CD4-positive, alpha-beta memory T cell (primary cell): ENCODE measurements at regions of chr1 and their contacts with region 1.

Region 1: DNA sequence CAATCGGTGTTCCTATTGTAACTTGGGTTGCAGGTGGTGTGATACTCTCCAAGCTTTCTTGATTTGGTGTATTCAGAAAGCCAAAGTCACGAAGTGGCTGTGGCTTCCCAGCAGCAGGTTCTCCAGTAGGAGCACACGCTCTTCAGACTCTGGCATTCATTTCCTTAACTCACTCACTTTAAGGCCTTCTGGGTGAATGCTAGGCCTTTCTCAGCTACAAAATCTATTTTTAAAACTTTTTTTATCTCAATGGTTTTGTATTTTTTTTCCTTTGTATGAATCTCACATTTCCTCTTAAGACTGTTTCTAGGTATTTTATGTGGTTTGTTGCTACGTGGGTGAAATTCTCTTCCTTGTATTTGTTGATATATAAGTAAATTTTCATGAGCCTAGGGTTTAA is 22.9 kb upstream of the PKN2 start:
- DNase-seq: peak in 1 of 5 donors; percentile 5
- H3K4me3 ChIP-seq: no peak overlapping the region
- H3K4me3 Mint-ChIP-seq: peak overlapping the region; percentile 1 to 68 (median 60)
- H3K27ac ChIP-seq: no peak overlapping the region
- H3K27ac Mint-ChIP-seq: peak overlapping the region in 6 of 7 donors; percentile 2 to 69 (median 59)
- H3K4me1 ChIP-seq: peaks cover 14% of the 10 kb centered on the region
- H3K4me1 Mint-ChIP-seq: peaks cover 11 to 20% (median 18%) of the 10 kb centered on the region in 4 donors
- H3K27me3 ChIP-seq: no peaks in the 10 kb centered on the region
- H3K27me3 Mint-ChIP-seq: peaks cover 2 to 6% of the 10 kb centered on the region in 2 donors

Region 2: GRCh38 chr1:88683541-88684481 is 22.6 kb after region 1 on chr1 and contains the start of gene PKN2:
- CTCF ChIA-PET with region 1: interaction called, 53 read pairs
- POLR2A ChIA-PET with region 1: interaction called, 16 read pairs
- intact Hi-C with region 1: no loop called
- DNase-seq: peak; percentile 97 to 98 (median 98)
- H3K4me3 ChIP-seq: peak within 1 kb of the TSS; percentile 43 to 82
- H3K4me3 Mint-ChIP-seq: peak within 1 kb of the TSS; percentile 95 to 99 (median 97)
- H3K27ac ChIP-seq: peak within 1 kb of the TSS; percentile 85
- H3K27ac Mint-ChIP-seq: peak within 1 kb of the TSS; percentile 96 to 99 (median 98)
- H3K4me1 ChIP-seq: peaks cover 39% of the 10 kb centered on the region
- H3K4me1 Mint-ChIP-seq: peaks cover 15 to 58% (median 24%) of the 10 kb centered on the region in 4 donors
- H3K27me3 ChIP-seq: no peaks in the 10 kb centered on the region
- H3K27me3 Mint-ChIP-seq: no peaks in the 10 kb centered on the region
- total RNA-seq, gene PKN2: 38.6 to 42.0 TPM

Region 3: DNA sequence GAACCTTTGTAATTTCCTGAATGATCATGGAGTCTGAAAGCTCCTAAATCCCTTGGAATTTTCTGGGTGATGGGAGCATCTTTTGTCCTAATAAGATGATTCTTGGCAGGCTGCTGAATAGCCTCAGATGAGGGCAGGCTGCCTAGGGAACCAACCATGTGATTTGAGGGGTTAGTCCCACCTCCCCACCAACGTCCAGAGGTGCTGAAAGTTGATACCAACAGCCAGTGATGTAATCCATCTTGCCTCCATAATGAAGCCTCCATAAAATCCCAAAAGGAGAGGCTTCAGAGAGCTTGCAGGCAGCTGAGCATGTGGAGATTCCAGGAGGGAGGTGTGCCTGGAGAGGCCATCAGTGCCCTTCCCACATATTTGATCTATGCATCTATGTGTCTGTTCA is 186.5 kb after region 1 on chr1:
- CTCF ChIA-PET with region 1: no interaction called
- POLR2A ChIA-PET with region 1: no interaction called
- intact Hi-C with region 1: no loop called
- DNase-seq: no peak
- H3K4me3 ChIP-seq: no peak overlapping the region
- H3K4me3 Mint-ChIP-seq: no peak overlapping the region
- H3K27ac ChIP-seq: no peak overlapping the region
- H3K27ac Mint-ChIP-seq: no peak overlapping the region
- H3K4me1 ChIP-seq: no peaks in the 10 kb centered on the region
- H3K4me1 Mint-ChIP-seq: peaks cover 0 to 3% (median under 1%) of the 10 kb centered on the region in 4 donors
- H3K27me3 ChIP-seq: no peaks in the 10 kb centered on the region
- H3K27me3 Mint-ChIP-seq: no peaks in the 10 kb centered on the region